ENCODE measurements at regions of chr17 and their contacts with region 1.

Region 1: DNA sequence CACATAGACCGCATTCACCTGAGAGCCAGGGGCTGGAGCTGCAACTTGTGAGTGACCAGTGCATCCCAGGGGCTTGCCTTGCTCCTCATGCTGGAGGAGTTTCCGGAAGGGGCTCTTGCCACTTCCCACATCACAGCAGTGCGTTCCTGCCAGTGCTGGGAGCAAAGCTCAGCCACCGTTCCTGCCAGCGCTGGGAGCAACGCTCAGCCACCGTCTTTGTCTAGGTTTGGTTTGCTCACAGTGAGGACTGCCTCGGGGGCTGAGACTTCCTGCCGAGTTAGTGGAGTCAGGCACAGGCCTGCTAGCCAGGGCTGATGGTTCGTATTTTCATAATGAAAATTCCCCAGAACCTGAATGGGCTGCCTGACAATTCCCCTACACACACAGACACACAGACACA is 5.4 kb upstream of the CHRNE start:
- DNase-seq: no peak
- ATAC-seq: no peak
- H3K4me3 ChIP-seq: no peak overlapping the region
- H3K27ac ChIP-seq: no peak overlapping the region
- H3K4me1 ChIP-seq: peaks cover 3% of the 10 kb centered on the region
- H3K27me3 ChIP-seq: peaks cover 2% of the 10 kb centered on the region; the same call in 1 of the 2 replicates
- CTCF ChIP-seq: no peak
- POLR2A ChIP-seq: no peak
- RAD21 ChIP-seq: no peak

Region 2: DNA sequence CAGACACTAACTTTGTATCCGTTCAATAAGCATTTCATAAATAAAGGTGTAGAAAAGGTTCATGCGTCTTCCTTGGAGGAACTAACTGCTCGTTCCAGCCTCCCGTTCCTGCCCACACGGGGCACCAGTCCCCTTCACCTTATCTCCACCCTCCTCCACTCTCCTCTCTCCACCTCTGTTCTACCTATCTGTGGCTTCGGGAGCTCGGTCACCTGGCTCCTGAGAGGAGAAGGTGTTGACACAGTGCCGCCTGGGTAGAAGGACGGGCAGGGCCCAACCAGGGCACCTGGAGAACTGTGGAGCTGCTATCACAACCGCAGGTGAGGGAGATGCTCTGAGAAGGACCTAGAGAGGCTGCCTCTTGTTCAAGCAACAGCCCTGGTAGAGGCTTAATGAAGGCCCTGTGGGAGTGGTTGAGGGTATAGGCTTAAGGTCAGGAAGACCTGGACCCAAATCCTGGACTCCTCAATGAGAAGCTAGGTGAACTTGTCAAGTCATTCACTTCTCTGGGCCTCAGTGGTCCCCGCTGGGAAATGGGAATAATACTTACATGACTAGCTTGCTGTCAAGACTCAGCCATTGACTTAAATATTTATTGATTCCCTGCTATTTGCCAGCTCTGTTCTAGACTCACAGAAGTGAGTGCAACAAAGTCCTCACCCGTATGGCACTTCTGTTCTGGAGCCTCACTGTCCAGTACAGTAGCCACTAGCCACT is 84.8 kb before region 1 on chr17:
- CTCF ChIA-PET with region 1: no interaction called
- POLR2A ChIA-PET with region 1: no interaction called
- dilution Hi-C with region 1: no loop called
- in situ Hi-C with region 1: no loop called
- intact Hi-C with region 1: no loop called
- DNase-seq: no peak
- ATAC-seq: no peak
- H3K4me3 ChIP-seq: no peak overlapping the region
- H3K27ac ChIP-seq: no peak overlapping the region
- H3K4me1 ChIP-seq: no peaks in the 10 kb centered on the region
- H3K27me3 ChIP-seq: no peaks in the 10 kb centered on the region
- CTCF ChIP-seq: no peak
- POLR2A ChIP-seq: no peak
- RAD21 ChIP-seq: no peak

Region 3: DNA sequence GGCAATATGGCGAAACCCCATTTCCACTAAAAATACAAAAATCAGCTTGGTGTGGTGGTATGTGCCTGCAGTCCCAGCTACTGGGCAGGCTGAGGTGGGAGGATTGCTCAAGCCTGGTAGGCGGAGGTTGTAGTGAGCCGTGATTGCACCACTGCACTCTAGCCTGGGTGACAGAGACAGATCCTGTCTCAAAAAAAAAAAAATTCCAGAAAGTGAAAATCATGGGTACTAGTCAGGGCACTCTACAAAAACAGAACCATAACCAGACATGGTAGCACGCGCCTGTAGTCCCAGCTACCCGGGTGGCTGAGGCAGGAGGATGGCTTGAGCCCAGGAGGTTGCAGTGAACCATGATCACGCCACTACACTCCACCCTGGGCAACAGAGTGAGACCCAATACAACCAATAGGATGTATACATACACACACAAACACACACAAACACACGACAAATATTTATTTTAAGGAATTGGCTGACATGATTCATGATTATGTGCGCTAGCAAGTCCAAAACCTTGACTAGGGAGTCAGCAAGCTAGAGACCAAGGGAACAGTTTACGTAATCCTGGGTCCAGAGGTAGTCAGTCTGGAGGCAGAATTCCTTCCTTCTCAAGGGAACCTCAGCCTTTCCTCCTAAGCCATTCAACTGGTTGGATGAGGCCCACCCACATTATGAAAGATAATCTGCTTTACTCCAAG is 12.2 kb after region 1 on chr17:
- CTCF ChIA-PET with region 1: interaction called, 15 read pairs
- POLR2A ChIA-PET with region 1: interaction called, 3 read pairs
- dilution Hi-C with region 1: no loop called
- in situ Hi-C with region 1: no loop called
- intact Hi-C with region 1: no loop called
- DNase-seq: peak; percentile 38
- ATAC-seq: peak; percentile 80
- H3K4me3 ChIP-seq: no peak overlapping the region
- H3K27ac ChIP-seq: no peak overlapping the region
- H3K4me1 ChIP-seq: 0 out of 2 replicates have a peak, but pooled peaks cover 2% of the 10 kb centered on the region
- H3K27me3 ChIP-seq: no peaks in the 10 kb centered on the region
- CTCF ChIP-seq: no peak
- POLR2A ChIP-seq: no peak
- RAD21 ChIP-seq: no peak

Region 4: GRCh38 chr17:4939796-4940624 is 31.7 kb after region 1 on chr17 and contains the starts of genes RNF167 and SLC25A11:
- CTCF ChIA-PET with region 1: interaction called, 3 read pairs
- POLR2A ChIA-PET with region 1: interaction called, 3 read pairs
- dilution Hi-C with region 1: no loop called
- in situ Hi-C with region 1: no loop called
- intact Hi-C with region 1: loop called (anchors 1 kb)
- DNase-seq: peak; percentile 100
- ATAC-seq: peak; percentile 89
- H3K4me3 ChIP-seq: peak within 1 kb of the TSS; percentile 68
- H3K27ac ChIP-seq: peak within 1 kb of the TSS; percentile 78
- H3K4me1 ChIP-seq: peaks cover 13% of the 10 kb centered on the region
- H3K27me3 ChIP-seq: no peaks in the 10 kb centered on the region
- CTCF ChIP-seq: no peak
- POLR2A ChIP-seq: peak; percentile 71
- RAD21 ChIP-seq: no peak
- total RNA-seq, gene RNF167: 13.1 and 13.3 TPM in 2 replicates
- total RNA-seq, gene SLC25A11: 30.8 and 35.0 TPM in 2 replicates

Region 5: DNA sequence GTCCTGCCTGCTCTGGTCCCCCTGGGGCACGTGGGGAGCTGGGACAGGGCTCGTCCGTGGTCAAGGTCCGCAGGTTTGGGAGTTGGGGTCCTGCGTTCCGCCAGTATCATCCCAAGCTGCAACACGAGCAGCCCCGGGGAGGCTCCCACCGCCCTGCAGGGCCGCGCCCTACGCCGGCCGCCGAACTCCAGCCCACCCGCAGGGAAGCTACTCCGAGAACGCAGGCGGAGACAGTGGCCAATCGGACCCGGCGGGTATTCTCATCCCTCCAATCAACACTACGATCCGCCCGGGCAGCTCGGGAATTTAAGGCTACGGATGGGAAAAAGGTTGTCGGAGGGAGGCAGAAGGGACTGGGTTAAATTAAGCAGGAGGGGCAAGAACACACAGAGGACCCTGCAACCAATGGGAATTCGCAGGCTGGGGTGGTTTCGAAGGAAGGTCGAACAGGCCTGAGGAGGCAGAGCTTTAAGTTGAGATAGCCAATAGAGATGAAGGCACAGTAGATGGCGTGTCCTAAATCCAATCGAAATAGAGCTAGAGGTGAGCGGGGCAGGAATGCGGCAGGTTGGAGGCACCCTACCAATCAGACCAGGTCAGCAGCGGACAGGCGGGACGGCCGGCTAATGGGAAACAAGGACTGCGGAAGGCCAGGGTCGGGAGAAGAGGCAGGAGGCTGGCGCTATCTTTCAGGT is 58.7 kb after region 1 on chr17:
- CTCF ChIA-PET with region 1: interaction called, 5 read pairs
- POLR2A ChIA-PET with region 1: no interaction called
- dilution Hi-C with region 1: no loop called
- in situ Hi-C with region 1: no loop called
- intact Hi-C with region 1: loop called (anchors 5 kb)
- DNase-seq: peak; percentile 100
- ATAC-seq: peak; percentile 85
- H3K4me3 ChIP-seq: peak overlapping the region; percentile 58
- H3K27ac ChIP-seq: peak overlapping the region; percentile 87
- H3K4me1 ChIP-seq: peaks cover 14% of the 10 kb centered on the region
- H3K27me3 ChIP-seq: no peaks in the 10 kb centered on the region
- CTCF ChIP-seq: no peak
- POLR2A ChIP-seq: no peak
- RAD21 ChIP-seq: no peak

Region 6: GRCh38 chr17:4986951-4987766 is 78.9 kb after region 1 on chr17 and contains the start of gene CAMTA2:
- CTCF ChIA-PET with region 1: interaction called, 3 read pairs
- POLR2A ChIA-PET with region 1: no interaction called
- dilution Hi-C with region 1: no loop called
- in situ Hi-C with region 1: no loop called
- intact Hi-C with region 1: loop called (anchors 1 kb)
- DNase-seq: peak; percentile 56
- ATAC-seq: peak; percentile 94
- H3K4me3 ChIP-seq: peak within 1 kb of the TSS; percentile 72
- H3K27ac ChIP-seq: peak within 1 kb of the TSS; percentile 72
- H3K4me1 ChIP-seq: peaks cover 7% of the 10 kb centered on the region
- H3K27me3 ChIP-seq: no peaks in the 10 kb centered on the region
- CTCF ChIP-seq: peak; percentile 71
- POLR2A ChIP-seq: no peak
- RAD21 ChIP-seq: peak; percentile 46
- total RNA-seq, gene CAMTA2: 1.4 TPM in 2 replicates

Region 7: DNA sequence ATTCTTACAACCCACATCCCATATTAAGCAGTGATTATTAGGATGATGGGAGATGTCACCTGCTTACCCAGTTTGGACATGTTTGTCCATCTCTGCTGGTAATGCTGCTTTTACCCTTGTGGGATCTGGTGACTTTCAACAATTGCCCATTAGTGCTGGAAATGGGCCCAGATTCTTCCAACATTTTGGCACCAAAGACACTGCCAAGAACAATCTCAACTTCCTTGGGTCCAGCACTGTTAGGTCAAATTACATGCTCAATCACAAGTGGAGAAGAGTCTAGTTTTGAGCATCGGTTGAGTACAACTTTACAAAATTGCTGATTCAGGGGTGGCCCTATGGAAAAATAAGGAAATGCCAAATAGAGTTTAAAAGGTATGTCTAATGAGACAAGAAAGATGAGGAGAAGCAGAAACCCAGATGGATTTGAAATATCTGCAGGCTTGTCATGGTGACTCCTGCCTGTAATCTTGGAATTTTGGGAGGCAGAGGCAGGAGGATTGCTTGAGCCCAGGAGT is 157.0 kb after region 1 on chr17:
- CTCF ChIA-PET with region 1: interaction called, 9 read pairs
- POLR2A ChIA-PET with region 1: no interaction called
- dilution Hi-C with region 1: no loop called
- in situ Hi-C with region 1: no loop called
- intact Hi-C with region 1: loop called (anchors 1 kb)
- DNase-seq: no peak
- ATAC-seq: no peak
- H3K4me3 ChIP-seq: no peak overlapping the region
- H3K27ac ChIP-seq: no peak overlapping the region
- H3K4me1 ChIP-seq: no peaks in the 10 kb centered on the region
- H3K27me3 ChIP-seq: peaks cover 7% of the 10 kb centered on the region; the same call in 1 of the 2 replicates
- CTCF ChIP-seq: no peak
- POLR2A ChIP-seq: no peak
- RAD21 ChIP-seq: no peak

Measured in IMR-90 (cell line).